Body of pancreas (tissue), 4 donors: ENCODE measurements at regions of chr7 and their contacts with region 1.

Region 1: DNA sequence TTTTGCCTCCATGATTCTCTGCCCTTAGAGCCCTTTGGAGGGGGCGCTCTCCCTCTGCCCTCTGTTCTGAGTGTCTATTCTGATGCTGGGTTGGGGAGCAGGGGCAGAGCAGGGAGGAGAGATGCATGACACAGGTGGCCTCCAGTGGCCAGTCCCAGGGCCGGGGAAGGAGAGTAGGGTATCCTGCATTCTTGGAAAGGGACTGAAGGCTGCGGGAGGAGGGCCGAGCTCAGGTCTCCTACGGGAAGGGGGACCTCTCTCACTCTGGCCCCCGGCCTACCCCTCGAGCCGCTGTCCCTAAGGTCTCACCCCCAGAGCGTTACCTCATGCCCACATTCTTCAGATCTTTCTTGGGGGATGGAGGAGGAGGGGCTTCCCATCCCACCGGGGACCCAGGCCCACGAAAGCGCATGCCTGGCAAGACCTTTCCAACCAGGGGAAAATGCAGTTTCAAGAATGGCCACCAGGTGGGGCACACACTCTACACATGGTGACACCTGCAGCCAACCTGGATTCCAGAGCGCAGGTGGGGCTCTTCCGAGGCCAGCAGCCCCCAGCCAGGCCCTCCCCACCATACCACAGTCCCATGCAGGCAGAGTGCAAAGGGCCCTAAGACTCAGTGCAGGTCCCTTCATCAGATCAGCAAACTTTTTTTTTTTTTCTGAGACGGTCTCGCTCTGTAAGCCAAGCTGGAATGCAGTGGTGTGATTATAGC is 86.4 kb downstream of the MYL10 start:
- DNase-seq: peak; percentile 70 to 87 (median 80)
- ATAC-seq: no peak
- H3K4me3 ChIP-seq: no peak overlapping the region
- H3K27ac ChIP-seq: no peak overlapping the region
- H3K4me1 ChIP-seq: no peaks in the 10 kb centered on the region
- H3K27me3 ChIP-seq: no peaks in the 10 kb centered on the region
- CTCF ChIP-seq: peak; percentile 83 to 91 (median 84)
- POLR2A ChIP-seq: no peak

Region 2: GRCh38 chr7:102272075-102272917 is 729.6 kb after region 1 on chr7:
- intact Hi-C with region 1: loop called (anchors 5 kb)
- DNase-seq: peak; percentile 74 to 84 (median 76)
- ATAC-seq: peak; percentile 77
- H3K4me3 ChIP-seq: no peak overlapping the region
- H3K27ac ChIP-seq: no peak overlapping the region
- H3K4me1 ChIP-seq: no peaks in the 10 kb centered on the region
- H3K27me3 ChIP-seq: no peaks in the 10 kb centered on the region
- CTCF ChIP-seq: peak; percentile 77 to 92 (median 86)
- POLR2A ChIP-seq: no peak